Ascending aorta (tissue), 2 donors: ENCODE measurements at regions of chr17 and their contacts with region 1.

Region 1: DNA sequence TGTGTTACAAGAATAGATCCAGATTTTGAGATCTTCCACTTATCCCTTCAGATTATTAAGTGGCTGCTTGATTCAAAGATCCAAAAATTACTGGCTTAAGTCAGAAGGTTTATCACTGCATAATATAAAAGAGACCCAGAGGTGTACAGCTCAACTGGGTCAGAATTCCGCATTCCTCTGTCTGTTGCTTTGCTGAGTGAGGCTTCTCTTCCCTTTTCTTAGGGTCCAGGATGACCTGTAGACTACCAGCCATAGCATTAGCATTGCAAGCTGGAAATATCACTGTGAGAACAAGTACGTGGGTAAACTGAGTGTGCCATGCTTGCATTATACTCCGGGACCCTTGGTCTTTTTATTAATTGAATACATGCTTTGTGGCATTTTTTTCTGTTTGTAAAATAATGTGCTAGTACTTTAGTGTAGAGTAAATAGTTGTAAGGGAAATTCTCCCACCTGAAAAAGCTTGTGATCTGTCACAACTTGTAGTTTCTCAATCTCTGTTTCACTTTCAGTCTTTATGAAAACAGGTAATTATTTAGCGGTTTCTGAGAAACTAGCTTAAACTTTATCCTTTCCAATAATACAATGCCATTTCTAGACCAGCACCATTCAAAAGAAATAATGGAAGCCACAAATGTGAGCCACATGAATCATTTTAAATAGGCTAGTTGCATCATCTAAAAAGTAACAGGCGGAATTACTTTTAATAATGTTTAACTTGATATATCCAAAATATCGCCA is 61.6 kb downstream of the TNRC6C start:
- DNase-seq: no peak
- H3K4me3 ChIP-seq: no peak overlapping the region
- H3K27ac ChIP-seq: no peak overlapping the region
- H3K4me1 ChIP-seq: peaks cover 0 to 2% of the 10 kb centered on the region in 2 donors
- H3K27me3 ChIP-seq: no peaks in the 10 kb centered on the region
- CTCF ChIP-seq: no peak

Region 2: DNA sequence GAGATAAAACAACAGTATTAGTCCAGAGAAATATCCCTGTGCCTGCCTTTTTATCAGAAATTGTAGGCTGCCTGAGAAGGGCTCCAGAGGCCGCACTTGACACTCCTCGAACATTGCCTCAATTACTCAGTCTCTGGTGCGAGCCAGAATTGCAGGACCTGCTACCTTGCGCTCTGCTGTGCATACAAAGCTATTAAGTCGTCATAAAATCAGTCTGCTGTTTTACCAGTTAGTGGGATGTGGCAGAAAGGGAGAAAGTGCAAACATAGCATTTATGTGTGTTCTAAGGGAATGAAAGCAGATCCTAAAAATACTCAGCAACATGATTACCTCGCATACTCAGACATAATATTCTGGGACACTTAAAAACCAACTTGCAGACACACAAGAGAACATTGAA is 37.9 kb after region 1 on chr17:
- intact Hi-C with region 1: loop called (anchors 5 kb)
- DNase-seq: no peak
- H3K4me3 ChIP-seq: no peak overlapping the region
- H3K27ac ChIP-seq: peak overlapping the region in 1 of 2 donors; percentile 27
- H3K4me1 ChIP-seq: peaks cover 3 to 8% of the 10 kb centered on the region in 2 donors
- H3K27me3 ChIP-seq: no peaks in the 10 kb centered on the region
- CTCF ChIP-seq: no peak